Aorta (tissue), 5 donors: ENCODE measurements at regions of chr19 and their contacts with region 1.

Region 1: GRCh38 chr19:14381689-14382474 is 638 bp downstream of the ADGRE5 start:
- DNase-seq: peak in 1 of 2 donors; percentile 77
- ATAC-seq: peak; percentile 56
- H3K4me3 ChIP-seq: peak overlapping the region; percentile 88 to 91
- H3K27ac ChIP-seq: peak overlapping the region; percentile 44 to 91
- H3K4me1 ChIP-seq: no peaks in the 10 kb centered on the region
- H3K27me3 ChIP-seq: no peaks in the 10 kb centered on the region

Region 2: DNA sequence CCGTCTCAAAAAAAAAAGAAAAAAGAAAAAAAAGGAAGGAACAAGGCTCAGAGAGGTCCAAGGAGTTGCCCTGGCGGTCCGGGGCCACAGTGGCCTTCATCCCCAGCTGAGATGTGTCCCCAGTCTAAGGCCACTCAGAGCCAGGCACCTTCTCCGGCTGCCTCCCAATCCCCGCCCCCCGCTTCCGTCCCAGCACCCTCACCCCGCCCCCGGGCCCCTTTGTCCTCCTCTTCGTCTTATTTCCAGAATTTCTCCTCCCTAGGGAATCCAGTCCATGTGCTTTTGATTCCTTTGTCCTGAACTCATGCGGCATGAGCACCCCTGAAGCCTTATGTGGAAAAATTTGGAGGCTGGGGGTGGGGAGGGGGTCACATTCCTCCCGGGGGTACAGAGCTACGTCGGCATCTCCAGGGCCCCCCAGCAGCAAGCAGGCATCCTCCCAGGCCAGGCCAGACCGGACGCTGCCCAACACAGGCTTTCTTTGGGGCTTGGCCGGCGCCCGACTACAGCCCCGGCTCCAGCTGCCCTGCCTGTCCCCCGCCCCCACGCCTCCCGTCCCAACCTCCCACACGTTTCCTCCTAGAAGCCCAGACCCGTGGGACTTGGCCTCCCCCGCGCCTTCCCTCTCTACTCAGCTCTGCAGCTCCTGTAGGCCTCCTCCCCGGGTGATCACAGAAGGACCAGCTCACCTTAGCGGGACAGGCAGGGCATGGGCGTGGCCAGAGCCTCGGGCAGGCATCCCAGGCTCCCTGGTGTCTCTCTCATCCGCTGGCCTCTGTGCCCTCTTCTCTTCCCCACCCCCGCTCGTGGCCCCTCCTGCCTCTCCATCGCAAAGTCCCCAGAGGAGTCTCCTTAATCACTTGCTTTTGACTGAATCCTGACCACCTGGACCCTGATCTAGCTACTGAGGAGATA is 18.4 kb before region 1 on chr19:
- intact Hi-C with region 1: loop called in 1 of 2 experiments (anchors 1 kb)
- DNase-seq: peak; percentile 90 to 96
- ATAC-seq: peak; percentile 89
- H3K4me3 ChIP-seq: no peak overlapping the region
- H3K27ac ChIP-seq: peak overlapping the region; percentile 57 to 64
- H3K4me1 ChIP-seq: no peaks in the 10 kb centered on the region
- H3K27me3 ChIP-seq: no peaks in the 10 kb centered on the region